ENCODE measurements at regions of chr4 and their contacts with region 1.

Region 1: GRCh38 chr4:168514249-168514852 is 17.5 kb downstream of the PALLD start:
- DNase-seq: no peak
- H3K4me3 Mint-ChIP-seq: no peak overlapping the region
- H3K27ac Mint-ChIP-seq: no peak overlapping the region
- H3K4me1 Mint-ChIP-seq: peaks cover 30% of the 10 kb centered on the region
- H3K27me3 Mint-ChIP-seq: no peaks in the 10 kb centered on the region

Region 2: GRCh38 chr4:168383510-168383909 is 130.8 kb before region 1 on chr4:
- CTCF ChIA-PET with region 1: no interaction called
- POLR2A ChIA-PET with region 1: no interaction called
- intact Hi-C with region 1: no loop called
- DNase-seq: no peak
- H3K4me3 Mint-ChIP-seq: no peak overlapping the region
- H3K27ac Mint-ChIP-seq: no peak overlapping the region
- H3K4me1 Mint-ChIP-seq: no peaks in the 10 kb centered on the region
- H3K27me3 Mint-ChIP-seq: no peaks in the 10 kb centered on the region

Region 3: DNA sequence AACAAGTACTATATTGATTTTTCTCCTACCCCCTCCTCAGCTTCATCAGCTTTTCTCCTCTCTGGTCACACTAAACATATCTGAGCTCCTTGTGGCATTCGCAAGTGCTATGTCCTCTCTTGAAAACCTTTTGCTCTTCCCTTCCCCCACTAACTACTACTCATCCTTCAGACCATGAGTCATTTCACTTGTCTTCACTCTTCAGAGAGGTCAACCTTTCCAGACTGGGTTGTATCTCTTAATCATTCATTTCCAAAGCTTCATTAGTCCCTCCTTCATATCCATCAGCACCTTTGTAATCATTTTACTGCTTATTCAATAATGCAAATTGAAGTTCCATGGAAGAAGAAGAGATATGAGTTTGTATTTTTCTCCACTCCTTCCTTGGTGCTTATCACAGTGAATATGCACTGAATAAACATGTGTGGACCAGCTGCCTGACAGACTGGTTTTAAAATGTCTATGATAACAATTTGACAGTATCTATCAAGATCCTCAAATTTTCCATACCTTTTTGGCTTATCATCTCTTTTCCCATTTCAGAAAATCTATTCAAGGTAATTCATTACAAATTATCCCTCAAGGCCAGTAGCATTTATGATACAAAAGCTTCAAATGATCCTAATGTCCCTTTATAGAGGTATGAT is 62.5 kb before region 1 on chr4:
- CTCF ChIA-PET with region 1: interaction called, 3 read pairs
- POLR2A ChIA-PET with region 1: interaction called, 4 read pairs
- intact Hi-C with region 1: loop called (anchors 2 kb)
- DNase-seq: no peak
- H3K4me3 Mint-ChIP-seq: no peak overlapping the region
- H3K27ac Mint-ChIP-seq: peak overlapping the region; percentile 61
- H3K4me1 Mint-ChIP-seq: peaks cover 30% of the 10 kb centered on the region
- H3K27me3 Mint-ChIP-seq: no peaks in the 10 kb centered on the region

Region 4: DNA sequence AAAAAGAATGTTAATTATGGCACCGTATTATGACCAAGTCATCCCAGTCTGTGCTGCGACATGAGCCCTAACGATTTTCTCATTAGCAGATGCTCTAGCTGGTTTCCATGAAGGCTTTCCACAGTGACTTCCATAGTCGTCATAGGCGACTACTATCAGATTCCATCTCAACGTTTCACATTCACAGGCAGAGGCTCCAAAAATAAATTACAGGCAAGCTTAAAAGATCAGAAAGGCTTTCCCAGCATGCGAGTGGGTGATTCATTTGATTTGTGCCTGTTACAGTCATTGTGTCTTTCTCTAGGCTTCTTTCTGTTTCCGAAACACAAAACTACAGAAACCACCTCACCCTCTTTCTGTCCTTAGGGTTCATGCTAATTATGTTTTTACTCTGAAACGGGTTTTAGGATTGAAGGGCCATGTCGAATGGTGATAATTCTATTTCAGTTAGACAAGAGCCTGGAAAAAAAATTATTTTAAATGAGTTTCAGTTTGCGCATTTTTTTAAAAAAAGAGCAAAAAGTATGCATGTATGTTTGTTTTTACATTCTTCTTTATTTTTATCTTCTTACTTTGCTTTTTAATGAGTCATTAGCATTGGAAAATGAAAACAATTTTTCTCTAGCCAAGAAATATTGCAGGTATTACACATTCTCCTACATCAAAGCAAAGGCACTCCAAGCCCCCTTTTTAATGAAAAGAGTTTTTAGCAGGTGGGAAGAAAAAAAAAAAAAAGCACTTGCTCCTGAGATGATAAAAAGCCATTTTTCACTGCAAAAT is 25.9 kb after region 1 on chr4:
- CTCF ChIA-PET with region 1: interaction called, 9 read pairs
- POLR2A ChIA-PET with region 1: no interaction called
- intact Hi-C with region 1: loop called (anchors 1 kb)
- DNase-seq: peak; percentile 30
- H3K4me3 Mint-ChIP-seq: no peak overlapping the region
- H3K27ac Mint-ChIP-seq: peak overlapping the region; percentile 26
- H3K4me1 Mint-ChIP-seq: peaks cover 6% of the 10 kb centered on the region
- H3K27me3 Mint-ChIP-seq: peaks cover 2% of the 10 kb centered on the region

Region 5: DNA sequence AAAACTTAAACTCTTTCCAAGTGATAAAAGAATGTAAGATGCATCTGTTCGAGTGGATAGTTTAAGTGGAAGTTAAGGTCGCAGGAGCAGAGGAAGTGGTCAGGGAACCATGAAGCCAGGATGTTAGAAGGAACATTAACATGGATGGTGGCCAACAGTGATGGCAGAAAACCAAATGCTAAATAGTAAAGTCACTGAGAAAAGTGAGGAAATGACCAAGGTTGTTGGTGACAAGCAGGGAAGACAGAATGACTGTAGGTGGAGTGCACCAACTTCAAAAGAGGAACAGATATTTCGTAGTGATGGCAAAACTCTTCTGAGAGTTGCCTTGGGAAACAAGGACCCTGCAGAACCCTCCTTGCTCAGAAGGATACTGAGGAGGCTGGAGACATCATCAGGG is 208.7 kb after region 1 on chr4:
- CTCF ChIA-PET with region 1: no interaction called
- POLR2A ChIA-PET with region 1: no interaction called
- intact Hi-C with region 1: loop called (anchors 10 kb)
- DNase-seq: no peak
- H3K4me3 Mint-ChIP-seq: no peak overlapping the region
- H3K27ac Mint-ChIP-seq: no peak overlapping the region
- H3K4me1 Mint-ChIP-seq: peaks cover 11% of the 10 kb centered on the region
- H3K27me3 Mint-ChIP-seq: peaks cover 8% of the 10 kb centered on the region

Region 6: GRCh38 chr4:168923526-168924194 is 409.3 kb after region 1 on chr4:
- CTCF ChIA-PET with region 1: interaction called, 10 read pairs
- POLR2A ChIA-PET with region 1: no interaction called
- intact Hi-C with region 1: no loop called
- DNase-seq: peak; percentile 52
- H3K4me3 Mint-ChIP-seq: no peak overlapping the region
- H3K27ac Mint-ChIP-seq: no peak overlapping the region
- H3K4me1 Mint-ChIP-seq: no peaks in the 10 kb centered on the region
- H3K27me3 Mint-ChIP-seq: no peaks in the 10 kb centered on the region

Region 7: DNA sequence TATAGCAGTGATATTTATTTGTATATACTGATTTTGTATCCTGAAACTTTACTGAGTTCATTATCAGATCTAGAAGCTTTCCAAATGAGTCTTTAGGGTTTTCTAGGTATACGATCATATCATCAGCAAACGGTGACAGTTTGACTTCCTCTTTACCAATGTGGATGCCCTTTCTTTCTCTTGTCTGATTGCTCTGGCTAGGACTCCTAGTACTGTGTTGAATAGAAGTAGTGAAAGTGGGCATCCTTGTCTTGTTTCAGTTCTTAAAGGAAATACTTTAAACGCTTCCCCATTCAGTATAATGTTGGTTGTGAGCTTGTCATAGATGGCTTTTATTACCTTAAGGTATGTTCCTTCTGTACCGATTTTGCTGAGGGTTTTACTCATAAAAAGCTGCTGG is 458.2 kb after region 1 on chr4:
- CTCF ChIA-PET with region 1: no interaction called
- POLR2A ChIA-PET with region 1: no interaction called
- intact Hi-C with region 1: no loop called
- DNase-seq: no peak
- H3K4me3 Mint-ChIP-seq: no peak overlapping the region
- H3K27ac Mint-ChIP-seq: no peak overlapping the region
- H3K4me1 Mint-ChIP-seq: no peaks in the 10 kb centered on the region
- H3K27me3 Mint-ChIP-seq: no peaks in the 10 kb centered on the region

Region 8: DNA sequence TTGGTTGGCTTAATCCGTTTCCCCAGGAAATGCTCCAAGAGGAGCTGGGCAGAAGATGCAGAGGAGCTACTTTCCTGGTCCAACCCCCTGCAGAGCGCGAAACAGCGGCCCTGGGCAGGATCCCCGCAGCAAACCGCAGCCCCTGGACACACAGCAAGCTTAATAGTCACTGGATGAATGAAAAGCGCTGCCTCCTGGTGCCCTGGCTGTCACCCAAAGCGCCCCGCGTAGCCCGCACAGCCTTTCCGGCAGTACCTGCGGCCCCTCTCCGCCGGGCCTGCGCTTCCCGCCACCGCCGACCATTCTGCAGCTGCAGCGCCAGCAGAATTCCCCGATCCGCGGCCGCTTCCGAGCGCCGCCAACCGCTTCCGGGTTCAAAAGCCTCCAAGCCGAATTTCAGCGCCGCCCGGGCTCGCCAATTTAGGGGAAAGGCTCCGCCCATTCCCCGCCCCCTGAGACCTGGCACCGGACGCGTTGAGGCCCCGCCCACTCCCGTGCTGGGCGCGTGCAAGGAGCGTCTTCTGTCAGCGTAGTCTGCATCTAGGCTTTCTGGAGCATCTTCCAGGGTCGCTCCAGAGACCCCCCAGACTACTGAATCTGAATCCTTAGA is 1243.3 kb after region 1 on chr4 and contains the start of gene HPF1:
- CTCF ChIA-PET with region 1: no interaction called
- POLR2A ChIA-PET with region 1: no interaction called
- intact Hi-C with region 1: loop called (anchors 2 kb)
- DNase-seq: peak; percentile 97
- H3K4me3 Mint-ChIP-seq: peak within 1 kb of the TSS; percentile 83
- H3K27ac Mint-ChIP-seq: peak within 1 kb of the TSS; percentile 70
- H3K4me1 Mint-ChIP-seq: peaks cover 24% of the 10 kb centered on the region
- H3K27me3 Mint-ChIP-seq: no peaks in the 10 kb centered on the region
- total RNA-seq, gene HPF1: 36.6 to 41.1 TPM

Measured in activated CD4-positive, alpha-beta memory T cell treated with anti-CD3 and anti-CD28 coated beads for 36 hours (primary cell).